Activated B cell treated with CpG ODN at 0.5 μM for 24 hours (primary cell): ENCODE measurements at regions of chr12 and their contacts with region 1.

Region 1: DNA sequence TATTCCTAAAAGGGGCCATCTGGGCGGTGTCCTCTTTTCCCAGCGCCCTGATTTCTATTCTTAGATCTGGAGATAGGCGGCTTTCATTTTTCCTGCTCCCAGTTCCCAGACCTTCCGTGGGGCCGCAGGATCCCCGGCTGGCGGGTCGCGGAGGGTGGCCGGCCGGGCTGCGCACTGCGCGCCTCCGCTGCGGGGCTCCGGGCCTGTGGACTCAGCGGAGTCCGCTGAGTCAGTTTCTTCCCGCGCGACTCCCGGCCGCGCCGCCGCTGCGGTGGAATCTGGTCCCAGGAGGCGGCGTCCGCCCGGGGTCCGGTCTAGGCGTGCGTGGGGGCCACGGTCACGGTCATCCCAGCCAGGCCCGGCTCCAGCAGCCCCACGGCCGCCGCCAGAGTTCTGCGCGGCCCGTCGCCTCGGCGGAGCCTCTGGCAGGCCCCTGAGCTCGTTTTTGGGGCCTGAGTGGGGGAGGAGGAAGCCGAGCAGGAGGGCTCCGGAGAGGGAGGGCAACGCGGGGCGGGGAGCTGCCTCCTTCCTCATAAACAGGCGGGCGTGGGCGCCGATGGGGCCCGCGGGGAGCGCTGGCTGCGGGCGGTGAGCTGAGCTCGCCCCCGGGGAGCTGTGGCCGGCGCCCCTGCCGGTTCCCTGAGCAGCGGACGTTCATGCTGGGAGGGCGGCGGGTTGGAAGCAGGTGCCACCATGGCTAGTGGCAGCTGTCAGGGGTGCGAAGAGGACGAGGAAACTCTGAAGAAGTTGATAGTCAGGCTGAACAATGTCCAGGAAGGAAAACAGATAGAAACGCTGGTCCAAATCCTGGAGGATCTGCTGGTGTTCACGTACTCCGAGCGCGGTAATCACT is at the start of gene LRRK2:
- DNase-seq: peak; percentile 90
- ATAC-seq: peak; percentile 82
- H3K4me3 Mint-ChIP-seq: peak within 1 kb of the TSS; percentile 91
- H3K27ac Mint-ChIP-seq: peak within 1 kb of the TSS; percentile 96
- H3K4me1 Mint-ChIP-seq: peaks cover 61% of the 10 kb centered on the region
- H3K27me3 Mint-ChIP-seq: no peaks in the 10 kb centered on the region
- CTCF ChIP-seq: no peak
- total RNA-seq, gene LRRK2: 59.9 and 71.7 TPM in 2 replicates

Region 2: DNA sequence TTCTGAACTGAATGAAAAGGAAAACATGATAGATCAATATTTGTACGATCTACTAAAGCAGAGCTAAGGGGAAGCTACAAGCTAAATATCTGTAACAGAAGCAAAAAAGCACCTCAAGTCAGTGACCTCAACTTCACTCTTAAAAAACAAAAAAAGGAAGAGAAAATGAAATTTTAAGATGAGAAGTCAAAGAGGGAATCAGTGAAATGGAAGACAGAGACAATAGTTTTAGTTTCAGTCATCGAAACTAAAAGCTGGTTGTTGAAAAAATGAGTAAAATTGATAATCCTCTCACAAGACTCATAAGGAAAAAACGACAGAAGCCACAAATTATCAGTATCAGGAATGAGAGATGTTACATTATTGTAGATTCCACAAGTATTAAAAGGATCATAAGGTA is 106.8 kb before region 1 on chr12:
- CTCF ChIA-PET with region 1: no interaction called
- POLR2A ChIA-PET with region 1: interaction called, 10 read pairs
- intact Hi-C with region 1: no loop called
- DNase-seq: no peak
- ATAC-seq: peak; percentile 64
- H3K4me3 Mint-ChIP-seq: peak overlapping the region; percentile 24
- H3K27ac Mint-ChIP-seq: peak overlapping the region; percentile 55
- H3K4me1 Mint-ChIP-seq: peaks cover 12% of the 10 kb centered on the region
- H3K27me3 Mint-ChIP-seq: no peaks in the 10 kb centered on the region
- CTCF ChIP-seq: no peak

Region 3: GRCh38 chr12:40158592-40159111 is 66.0 kb before region 1 on chr12:
- CTCF ChIA-PET with region 1: interaction called, 8 read pairs
- POLR2A ChIA-PET with region 1: interaction called, 105 read pairs
- intact Hi-C with region 1: loop called (anchors 1 kb)
- DNase-seq: no peak
- ATAC-seq: peak; percentile 76
- H3K4me3 Mint-ChIP-seq: peak overlapping the region; percentile 69
- H3K27ac Mint-ChIP-seq: peak overlapping the region; percentile 87
- H3K4me1 Mint-ChIP-seq: peaks cover 56% of the 10 kb centered on the region
- H3K27me3 Mint-ChIP-seq: no peaks in the 10 kb centered on the region
- CTCF ChIP-seq: no peak

Region 4: DNA sequence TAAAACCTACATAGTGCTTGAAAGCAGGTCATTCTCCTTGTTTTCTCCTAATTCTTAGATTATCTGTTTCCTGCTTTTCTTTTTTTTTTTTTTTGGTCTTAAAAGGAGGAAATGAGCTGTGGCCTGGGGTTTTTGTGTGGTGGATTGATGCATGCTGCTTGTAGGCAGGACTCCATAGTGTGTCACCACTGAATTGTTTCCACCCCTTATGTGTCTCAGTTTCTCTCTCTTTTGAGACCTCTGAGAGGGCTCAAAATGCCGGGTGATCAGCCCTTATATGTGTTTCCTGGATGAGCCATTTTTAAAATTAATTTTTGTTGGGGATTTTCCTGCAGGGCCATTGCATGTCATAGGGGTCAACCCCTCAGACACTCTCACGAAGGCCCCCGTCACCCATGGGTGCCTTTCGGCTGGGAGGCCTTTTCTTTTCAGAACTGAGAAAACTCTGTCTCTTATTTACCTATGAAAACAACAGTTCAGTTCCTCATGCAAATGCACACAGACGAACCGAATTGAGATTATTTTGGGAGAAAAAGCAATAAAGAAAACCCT is 31.9 kb before region 1 on chr12:
- CTCF ChIA-PET with region 1: interaction called, 3 read pairs
- POLR2A ChIA-PET with region 1: interaction called, 81 read pairs
- intact Hi-C with region 1: loop called (anchors 1 kb)
- DNase-seq: peak; percentile 50
- ATAC-seq: peak; percentile 96
- H3K4me3 Mint-ChIP-seq: peak overlapping the region; percentile 83
- H3K27ac Mint-ChIP-seq: peak overlapping the region; percentile 93
- H3K4me1 Mint-ChIP-seq: peaks cover 45% of the 10 kb centered on the region
- H3K27me3 Mint-ChIP-seq: no peaks in the 10 kb centered on the region
- CTCF ChIP-seq: no peak

Region 5: GRCh38 chr12:40208707-40209446 is 15.8 kb before region 1 on chr12:
- CTCF ChIA-PET with region 1: interaction called, 6 read pairs
- POLR2A ChIA-PET with region 1: interaction called, 82 read pairs
- intact Hi-C with region 1: loop called (anchors 1 kb)
- DNase-seq: no peak
- ATAC-seq: peak; percentile 94
- H3K4me3 Mint-ChIP-seq: peak overlapping the region; percentile 61
- H3K27ac Mint-ChIP-seq: peak overlapping the region; percentile 90
- H3K4me1 Mint-ChIP-seq: peaks cover 28% of the 10 kb centered on the region
- H3K27me3 Mint-ChIP-seq: no peaks in the 10 kb centered on the region
- CTCF ChIP-seq: no peak

Region 6: GRCh38 chr12:40248585-40249297 is 24.1 kb after region 1 on chr12:
- CTCF ChIA-PET with region 1: no interaction called
- POLR2A ChIA-PET with region 1: interaction called, 23 read pairs
- intact Hi-C with region 1: loop called (anchors 1 kb)
- DNase-seq: no peak
- ATAC-seq: peak; percentile 72
- H3K4me3 Mint-ChIP-seq: peak overlapping the region; percentile 72
- H3K27ac Mint-ChIP-seq: peak overlapping the region; percentile 80
- H3K4me1 Mint-ChIP-seq: peaks cover 23% of the 10 kb centered on the region
- H3K27me3 Mint-ChIP-seq: no peaks in the 10 kb centered on the region
- CTCF ChIP-seq: no peak

Region 7: DNA sequence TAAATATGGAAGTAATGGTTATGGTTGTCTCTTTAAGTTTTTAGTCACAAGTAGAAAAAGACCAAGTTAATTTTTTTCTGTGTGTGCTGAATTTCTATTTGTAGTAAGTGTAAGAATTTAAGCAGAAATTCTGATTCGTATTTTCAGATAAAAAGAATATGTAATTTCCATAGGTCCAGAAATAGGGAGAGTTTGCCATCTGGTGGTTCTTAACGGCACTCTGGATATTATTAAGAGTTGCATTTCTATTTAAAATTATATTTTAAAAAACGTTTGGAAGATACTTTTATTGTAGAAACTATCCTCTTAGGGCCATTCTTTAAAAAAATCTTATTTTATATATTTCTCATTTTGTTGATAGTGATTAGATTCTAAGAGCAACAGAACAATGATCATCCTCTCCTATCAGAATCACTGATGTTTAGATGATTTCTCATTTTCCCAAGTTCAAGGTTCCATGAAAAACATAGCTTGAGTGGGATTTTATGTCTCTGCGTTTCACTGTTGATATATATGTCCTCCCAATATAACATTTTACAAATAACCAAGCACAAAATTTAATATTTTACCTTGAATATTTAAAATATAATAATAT is 88.4 kb after region 1 on chr12:
- CTCF ChIA-PET with region 1: interaction called, 9 read pairs
- POLR2A ChIA-PET with region 1: interaction called, 37 read pairs
- intact Hi-C with region 1: loop called (anchors 1 kb)
- DNase-seq: no peak
- ATAC-seq: no peak
- H3K4me3 Mint-ChIP-seq: no peak overlapping the region
- H3K27ac Mint-ChIP-seq: peak overlapping the region; percentile 69
- H3K4me1 Mint-ChIP-seq: peaks cover 35% of the 10 kb centered on the region
- H3K27me3 Mint-ChIP-seq: no peaks in the 10 kb centered on the region
- CTCF ChIP-seq: peak; percentile 60